ENCODE measurements at regions of chr19 and their contacts with region 1.

Region 1: GRCh38 chr19:12139885-12140547 is at the start of gene ZNF20:
- DNase-seq: peak; percentile 98
- H3K4me3 ChIP-seq: peak within 1 kb of the TSS; percentile 58 to 92 (median 72)
- H3K27ac ChIP-seq: peak within 1 kb of the TSS; percentile 83 to 94 (median 87)
- H3K4me1 ChIP-seq: peaks cover 6 to 21% (median 18%) of the 10 kb centered on the region in 4 donors
- H3K27me3 ChIP-seq: no peaks in the 10 kb centered on the region
- CTCF ChIP-seq: peak in 1 of 5 experiments; percentile 5
- EP300 ChIP-seq: no peak
- POLR2A ChIP-seq: peak; percentile 59
- total RNA-seq, gene ZNF20: 0.37 to 4.8 (median 2.9) TPM

Region 2: GRCh38 chr19:11881151-11881800 is 258.7 kb before region 1 on chr19:
- in situ Hi-C with region 1: loop called in 1 of 4 experiments (anchors 25 kb)
- intact Hi-C with region 1: loop called (anchors 5 kb)
- DNase-seq: peak; percentile 73
- H3K4me3 ChIP-seq: no peak overlapping the region
- H3K27ac ChIP-seq: no peak overlapping the region
- H3K4me1 ChIP-seq: peaks cover 0 to 2% (median 0%) of the 10 kb centered on the region in 4 donors
- H3K27me3 ChIP-seq: no peaks in the 10 kb centered on the region
- CTCF ChIP-seq: peak; percentile 71 to 80 (median 74)
- EP300 ChIP-seq: no peak
- POLR2A ChIP-seq: no peak

Region 3: GRCh38 chr19:11887611-11888531 is 252.1 kb before region 1 on chr19 and contains the start of gene ZNF69:
- in situ Hi-C with region 1: loop called in 1 of 4 experiments (anchors 25 kb)
- intact Hi-C with region 1: loop called (anchors 5 kb)
- DNase-seq: peak; percentile 94
- H3K4me3 ChIP-seq: peak within 1 kb of the TSS; percentile 53 to 73 (median 58)
- H3K27ac ChIP-seq: peak within 1 kb of the TSS; percentile 88 to 95 (median 94)
- H3K4me1 ChIP-seq: peaks cover 0 to 33% (median 20%) of the 10 kb centered on the region in 4 donors
- H3K27me3 ChIP-seq: no peaks in the 10 kb centered on the region
- CTCF ChIP-seq: peak; percentile 12 to 46 (median 18)
- EP300 ChIP-seq: no peak
- POLR2A ChIP-seq: peak; percentile 68
- total RNA-seq, gene ZNF69: 27.4 to 42.6 (median 29.9) TPM

Region 4: DNA sequence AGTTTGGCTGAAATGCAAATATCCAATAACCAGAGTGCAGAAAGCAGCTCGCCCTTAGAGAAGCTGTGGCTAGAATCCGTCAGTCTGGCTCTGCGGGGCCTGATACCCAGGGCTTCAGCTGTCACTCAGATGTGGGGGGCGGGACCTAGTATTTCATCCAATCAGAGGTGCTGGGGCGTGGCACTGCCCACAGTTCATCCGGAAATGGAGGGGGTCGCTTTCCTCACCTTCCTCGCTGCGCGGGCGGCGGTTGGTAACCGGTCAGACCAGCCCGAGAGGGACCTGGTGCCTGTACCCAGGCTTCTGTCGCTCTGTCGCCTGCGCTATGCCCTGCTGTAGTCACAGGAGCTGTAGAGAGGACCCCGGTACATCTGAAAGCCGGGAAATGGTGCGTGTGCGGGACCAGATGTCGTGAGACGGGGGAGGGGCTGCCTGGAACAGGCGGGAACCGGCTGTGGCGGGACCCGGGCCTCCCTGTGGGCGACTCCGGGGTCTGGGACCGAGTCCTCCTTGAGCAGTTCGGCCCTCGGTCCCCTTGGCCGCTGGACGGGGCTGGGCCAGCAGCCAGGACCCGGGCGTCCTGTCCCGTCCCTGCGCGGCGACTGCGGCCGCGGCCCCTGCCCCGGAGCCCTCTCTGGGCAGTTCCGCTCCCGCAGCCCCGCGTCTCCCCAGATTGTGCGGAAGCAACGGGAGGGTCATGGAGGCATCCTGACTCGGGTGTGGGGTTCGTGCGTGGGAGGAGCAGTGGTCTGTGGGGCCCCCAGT is 214.9 kb before region 1 on chr19 and contains the start of gene ZNF700:
- in situ Hi-C with region 1: loop called in 1 of 4 experiments (anchors 25 kb)
- intact Hi-C with region 1: no loop called
- DNase-seq: peak; percentile 97
- H3K4me3 ChIP-seq: peak within 1 kb of the TSS; percentile 82 to 93 (median 90)
- H3K27ac ChIP-seq: peak within 1 kb of the TSS; percentile 97 to 100 (median 98)
- H3K4me1 ChIP-seq: peaks cover 11 to 25% (median 18%) of the 10 kb centered on the region in 4 donors
- H3K27me3 ChIP-seq: no peaks in the 10 kb centered on the region
- CTCF ChIP-seq: no peak
- EP300 ChIP-seq: peak; percentile 29
- POLR2A ChIP-seq: peak; percentile 93
- total RNA-seq, gene ZNF700: 25.8 to 38.3 (median 29.1) TPM

Region 5: GRCh38 chr19:11987405-11988281 is 152.4 kb before region 1 on chr19:
- in situ Hi-C with region 1: loop called in 1 of 4 experiments (anchors 25 kb)
- intact Hi-C with region 1: no loop called
- DNase-seq: peak; percentile 97
- H3K4me3 ChIP-seq: peak overlapping the region; percentile 70 to 86 (median 78)
- H3K27ac ChIP-seq: peak overlapping the region; percentile 89 to 94 (median 92)
- H3K4me1 ChIP-seq: peaks cover 0 to 9% (median 4%) of the 10 kb centered on the region in 4 donors
- H3K27me3 ChIP-seq: no peaks in the 10 kb centered on the region
- CTCF ChIP-seq: no peak
- EP300 ChIP-seq: no peak
- POLR2A ChIP-seq: peak; percentile 85

Region 6: GRCh38 chr19:12052497-12053169 is 87.4 kb before region 1 on chr19 and contains the start of gene ZNF878:
- in situ Hi-C with region 1: loop called in 3 of 4 experiments (anchors 5 to 10 kb)
- intact Hi-C with region 1: loop called (anchors 5 kb)
- DNase-seq: peak; percentile 93
- H3K4me3 ChIP-seq: peak within 1 kb of the TSS; percentile 59 to 89 (median 64)
- H3K27ac ChIP-seq: peak within 1 kb of the TSS; percentile 75 to 85 (median 82)
- H3K4me1 ChIP-seq: peaks cover 0 to 19% (median 13%) of the 10 kb centered on the region in 4 donors
- H3K27me3 ChIP-seq: no peaks in the 10 kb centered on the region
- CTCF ChIP-seq: no peak
- EP300 ChIP-seq: no peak
- POLR2A ChIP-seq: peak; percentile 76
- total RNA-seq, gene ZNF878: 0.32 TPM in 1 of 4 donors, not detected in the others

Region 7: DNA sequence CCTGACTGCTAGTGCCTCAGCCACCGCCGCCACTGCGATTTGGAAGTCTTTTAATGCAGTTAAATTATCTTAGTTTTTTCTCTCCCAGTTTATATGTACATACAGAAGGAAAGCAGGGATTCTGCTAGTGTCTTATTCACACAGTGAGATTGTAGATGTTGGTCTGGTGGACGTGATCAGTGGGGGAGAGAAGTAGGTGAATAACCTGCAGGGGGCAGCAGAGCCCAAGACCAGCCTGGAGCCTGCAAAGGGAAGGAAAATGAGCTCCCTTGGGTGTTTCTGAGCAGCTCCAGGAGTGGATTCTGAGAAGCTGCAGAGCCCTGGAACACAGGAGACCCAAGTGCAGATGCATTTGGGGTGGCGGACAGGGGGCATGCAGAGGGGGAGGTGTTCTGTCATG is 49.2 kb before region 1 on chr19:
- in situ Hi-C with region 1: no loop called
- intact Hi-C with region 1: loop called (anchors 1 kb)
- DNase-seq: peak; percentile 58
- H3K4me3 ChIP-seq: no peak overlapping the region
- H3K27ac ChIP-seq: no peak overlapping the region
- H3K4me1 ChIP-seq: peaks cover 0 to 12% (median 3%) of the 10 kb centered on the region in 4 donors
- H3K27me3 ChIP-seq: no peaks in the 10 kb centered on the region
- CTCF ChIP-seq: peak; percentile 30 to 57 (median 45)
- EP300 ChIP-seq: no peak
- POLR2A ChIP-seq: no peak

Region 8: DNA sequence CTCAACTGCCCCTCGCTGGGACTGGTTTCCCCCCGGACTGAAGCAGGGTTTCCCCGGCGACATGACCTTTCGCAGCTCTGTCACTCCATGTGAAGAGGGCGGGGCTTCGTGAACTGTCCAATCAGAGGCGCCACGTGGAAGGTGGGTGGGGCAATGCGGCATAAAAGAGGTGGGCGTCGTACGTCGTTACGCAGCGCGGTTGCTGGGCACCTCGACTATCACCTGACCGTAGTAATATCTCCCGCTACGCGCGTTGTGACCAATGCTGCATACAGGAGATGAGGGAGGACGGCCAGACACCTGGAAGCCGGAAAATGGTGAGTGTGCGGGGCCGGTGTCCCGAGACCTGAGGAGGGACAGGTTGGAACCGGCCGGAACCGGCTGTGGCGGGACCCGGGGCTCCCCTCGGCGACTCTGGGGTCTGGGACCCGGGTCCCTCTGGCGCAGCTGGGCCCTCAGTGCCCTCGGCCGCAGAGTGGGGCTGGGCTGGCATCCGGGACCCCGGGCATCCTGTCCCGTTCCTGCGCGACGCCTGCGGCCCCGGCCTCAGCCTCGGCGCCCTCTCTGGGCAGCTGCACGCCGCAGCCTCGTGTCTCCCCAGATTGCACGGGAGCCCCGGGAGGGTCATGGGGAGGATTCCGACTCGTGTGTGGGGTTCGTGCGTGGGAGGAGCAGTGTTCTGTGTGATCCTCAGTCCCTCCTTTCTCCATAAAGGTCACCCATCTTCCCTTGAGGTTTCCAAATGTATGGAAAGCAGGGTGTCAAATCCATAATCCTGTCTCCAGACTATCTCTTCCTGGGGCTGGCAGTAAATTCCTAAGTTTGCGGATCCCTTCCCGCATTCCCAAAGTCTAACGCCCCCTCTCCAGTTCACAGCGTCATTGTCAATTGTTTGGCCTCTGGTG is 55.1 kb after region 1 on chr19:
- in situ Hi-C with region 1: no loop called
- intact Hi-C with region 1: no loop called
- DNase-seq: peak; percentile 79
- H3K4me3 ChIP-seq: peak overlapping the region; percentile 8 to 82 (median 49)
- H3K27ac ChIP-seq: peak overlapping the region; percentile 75 to 84 (median 78)
- H3K4me1 ChIP-seq: peaks cover 0 to 11% (median 0%) of the 10 kb centered on the region in 4 donors
- H3K27me3 ChIP-seq: no peaks in the 10 kb centered on the region
- CTCF ChIP-seq: no peak
- EP300 ChIP-seq: no peak
- POLR2A ChIP-seq: peak; percentile 29